Natural killer cell (primary cell): ENCODE measurements at regions of chr3 and their contacts with region 1.

Region 1: DNA sequence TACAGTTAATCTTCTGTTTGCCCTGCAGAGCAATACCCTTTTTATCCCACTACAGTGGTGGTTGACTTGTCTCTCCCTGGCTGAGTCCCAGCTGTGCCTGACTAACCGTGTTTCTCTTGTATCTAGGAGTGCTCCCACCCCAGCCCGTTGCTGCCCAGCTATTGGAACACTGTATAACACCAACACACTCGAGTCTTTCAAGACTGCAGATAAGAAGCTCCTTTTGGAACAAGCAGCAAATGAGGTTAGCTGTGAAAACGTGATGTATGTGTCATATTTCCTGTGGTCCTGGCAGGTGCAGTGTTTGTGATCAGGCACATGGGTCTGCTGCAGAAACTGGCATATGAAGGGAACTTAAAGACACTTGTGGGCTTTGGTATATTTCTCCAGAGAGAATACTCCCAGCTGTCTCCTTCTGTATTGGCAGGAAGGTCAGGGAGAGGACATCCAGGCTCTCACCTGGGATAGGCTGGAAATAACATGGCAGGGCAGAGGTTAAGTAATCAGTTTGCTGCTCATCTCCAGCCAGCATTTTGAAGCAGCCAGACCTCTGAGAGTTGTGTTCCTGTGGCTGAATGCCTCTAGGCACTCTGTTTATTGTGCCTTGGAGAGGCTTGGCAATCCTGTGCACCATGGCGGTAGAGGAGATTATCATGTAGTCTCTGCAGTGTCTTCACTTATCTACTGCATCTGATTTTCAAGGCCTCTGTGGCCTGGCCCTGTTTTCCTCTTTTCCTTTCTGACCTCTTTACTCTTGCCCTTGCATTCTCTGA is 34.8 kb downstream of the ATG7 start:
- DNase-seq: peak; percentile 27 to 58
- ATAC-seq: peak; percentile 84 to 96 (median 92)
- H3K4me3 ChIP-seq: no peak overlapping the region
- H3K4me3 Mint-ChIP-seq: peak overlapping the region; percentile 61
- H3K27ac ChIP-seq: peak overlapping the region; percentile 28
- H3K27ac Mint-ChIP-seq: peak overlapping the region; percentile 82 to 94
- H3K4me1 ChIP-seq: peaks cover 15% of the 10 kb centered on the region
- H3K4me1 Mint-ChIP-seq: peaks cover 34 to 37% of the 10 kb centered on the region in 2 donors
- H3K27me3 ChIP-seq: no peaks in the 10 kb centered on the region
- H3K27me3 Mint-ChIP-seq: no peaks in the 10 kb centered on the region
- CTCF ChIP-seq: no peak

Region 2: DNA sequence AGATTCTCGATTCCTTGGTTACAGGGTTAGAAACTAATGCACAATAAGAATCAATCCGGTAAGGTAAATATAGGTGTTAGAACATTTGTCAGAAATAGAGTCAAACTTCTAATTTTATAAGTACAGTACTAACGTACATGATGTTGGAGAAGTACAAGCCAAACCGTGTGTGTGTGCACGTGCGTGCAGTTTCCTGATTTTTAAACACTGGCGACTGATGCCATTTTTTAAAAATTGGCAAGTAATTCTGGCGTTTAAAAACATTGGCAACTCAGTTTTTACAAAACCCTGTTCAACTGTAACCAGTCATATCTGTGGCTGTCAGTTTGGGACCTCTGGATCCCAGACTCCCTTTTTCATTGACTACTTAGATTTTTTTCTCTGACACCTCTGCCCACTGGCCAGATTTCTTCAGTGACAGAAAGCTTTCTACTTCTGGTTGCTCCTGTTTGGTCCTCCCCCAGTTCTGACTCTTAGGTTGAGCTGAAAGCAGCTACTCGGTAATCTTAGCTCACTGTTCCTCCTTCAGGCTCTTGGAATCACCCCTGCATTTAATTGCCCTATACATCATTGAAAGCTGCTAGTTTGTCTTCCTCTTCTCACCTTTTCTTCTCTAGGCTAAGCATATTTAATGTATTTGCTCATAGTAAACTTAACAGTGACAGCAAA is 34.0 kb before region 1 on chr3:
- intact Hi-C with region 1: no loop called
- DNase-seq: peak in 1 of 2 donors; percentile 28
- ATAC-seq: peak in 1 of 3 donors; percentile 17
- H3K4me3 ChIP-seq: peak overlapping the region; percentile 87
- H3K4me3 Mint-ChIP-seq: peak overlapping the region; percentile 96
- H3K27ac ChIP-seq: peak overlapping the region; percentile 91
- H3K27ac Mint-ChIP-seq: peak overlapping the region; percentile 97
- H3K4me1 ChIP-seq: peaks cover 23% of the 10 kb centered on the region
- H3K4me1 Mint-ChIP-seq: peaks cover 31 to 48% of the 10 kb centered on the region in 2 donors
- H3K27me3 ChIP-seq: no peaks in the 10 kb centered on the region
- H3K27me3 Mint-ChIP-seq: no peaks in the 10 kb centered on the region
- CTCF ChIP-seq: no peak

Region 3: DNA sequence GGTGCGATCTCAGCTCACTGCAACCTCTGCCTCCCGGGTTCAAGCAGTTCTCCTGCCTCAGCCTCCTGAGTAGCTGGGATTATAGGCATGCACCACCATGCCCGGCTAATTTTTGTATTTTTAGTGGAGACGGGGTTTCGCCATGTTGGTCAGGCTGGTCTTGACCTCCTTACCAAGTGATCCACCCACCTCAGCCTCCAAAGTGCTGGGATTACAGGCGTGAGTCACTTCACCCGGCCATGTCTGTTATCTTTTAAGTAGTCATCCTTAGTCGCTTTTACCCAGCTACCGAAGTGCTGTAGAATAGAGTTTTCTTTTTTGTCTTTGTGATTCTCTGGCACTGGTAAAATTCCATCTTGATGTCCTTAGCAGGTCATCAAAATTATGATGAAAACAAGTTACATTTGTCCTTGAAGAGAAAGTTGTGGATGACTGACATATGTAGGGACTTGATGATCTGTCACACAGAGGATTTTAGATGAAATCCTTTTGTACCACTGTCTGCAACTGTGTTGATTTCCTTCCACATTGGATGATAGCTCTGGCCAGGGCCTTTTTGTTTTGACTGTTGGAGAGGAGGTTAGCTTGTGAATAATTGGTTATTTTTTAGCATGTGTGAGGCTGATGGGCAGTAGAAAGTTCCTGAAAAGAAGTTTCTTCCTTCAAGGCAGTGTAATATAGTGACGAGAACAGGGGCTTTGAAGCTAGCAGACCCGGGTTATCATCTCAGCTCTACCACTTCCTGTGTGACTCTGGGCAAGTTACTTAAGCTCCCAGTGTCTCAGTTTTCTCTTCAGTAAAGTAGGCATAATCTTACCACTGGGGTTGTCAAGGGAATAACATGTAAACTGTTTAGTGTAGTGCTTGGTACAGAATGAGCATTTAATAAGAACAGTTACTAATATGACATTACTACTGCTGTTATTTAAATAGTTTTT is 16.0 kb before region 1 on chr3:
- intact Hi-C with region 1: loop called (anchors 1 kb)
- DNase-seq: peak; percentile 34 to 77
- ATAC-seq: peak; percentile 83 to 93 (median 92)
- H3K4me3 ChIP-seq: no peak overlapping the region
- H3K4me3 Mint-ChIP-seq: peak overlapping the region; percentile 74
- H3K27ac ChIP-seq: peak overlapping the region; percentile 89
- H3K27ac Mint-ChIP-seq: peak overlapping the region; percentile 94
- H3K4me1 ChIP-seq: peaks cover 36% of the 10 kb centered on the region
- H3K4me1 Mint-ChIP-seq: peaks cover 57 to 61% of the 10 kb centered on the region in 2 donors
- H3K27me3 ChIP-seq: no peaks in the 10 kb centered on the region
- H3K27me3 Mint-ChIP-seq: no peaks in the 10 kb centered on the region
- CTCF ChIP-seq: no peak